Activated CD8-positive, alpha-beta T cell treated with anti-CD3 and anti-CD28 coated beads, Interleukin-2, amount 10 ng/mL, durations not matched to agents 7 days and 5 days (primary cell): ENCODE measurements at regions of chr3 and their contacts with region 1.

Region 1: DNA sequence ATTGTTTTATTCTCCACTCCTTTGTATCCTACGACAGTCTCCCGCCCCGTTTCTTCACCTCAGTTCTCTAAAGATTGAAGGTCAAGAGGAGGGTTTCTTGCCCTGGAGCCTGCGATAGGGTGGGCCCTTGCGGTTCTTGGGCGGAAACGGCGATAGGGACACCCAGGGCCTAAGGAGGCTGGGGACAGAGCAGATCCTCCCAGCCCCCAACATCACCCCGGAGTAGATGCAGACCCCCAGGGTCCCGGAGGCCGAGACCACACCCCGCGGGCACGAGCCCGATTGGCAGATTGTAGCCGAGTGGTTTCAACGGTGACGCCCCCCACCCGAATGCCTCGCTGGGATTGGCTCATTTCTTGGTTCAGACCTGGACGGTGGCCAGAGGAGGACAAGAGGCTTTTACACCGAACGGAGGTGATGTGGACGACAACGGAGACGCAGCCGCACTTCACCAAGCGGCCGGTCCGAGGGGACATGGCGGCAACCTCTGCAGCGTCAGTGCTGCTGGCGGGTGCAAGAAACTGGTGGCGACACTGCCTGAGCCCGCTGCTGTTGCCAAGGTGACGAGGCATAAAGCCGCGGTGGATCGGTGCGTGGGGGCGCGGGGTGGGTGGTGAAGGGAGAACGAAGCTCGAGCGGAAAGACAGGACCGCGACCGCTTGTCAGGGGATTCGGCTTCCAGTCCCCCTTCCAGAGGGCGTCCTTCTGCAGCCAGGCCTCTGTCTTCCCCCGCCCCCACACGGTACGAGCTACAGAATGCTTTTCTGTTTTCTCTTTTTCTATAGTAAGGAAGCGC is 19.0 kb upstream of the MCF2L2 start:
- DNase-seq: peak; percentile 85
- ATAC-seq: peak; percentile 90
- H3K4me3 Mint-ChIP-seq: peak overlapping the region; percentile 87
- H3K27ac Mint-ChIP-seq: peak overlapping the region; percentile 82
- H3K4me1 Mint-ChIP-seq: peaks cover 14% of the 10 kb centered on the region
- H3K27me3 Mint-ChIP-seq: peaks cover 10% of the 10 kb centered on the region

Region 2: GRCh38 chr3:183427876-183428446 is 19.4 kb before region 1 on chr3:
- CTCF ChIA-PET with region 1: interaction called, 4 read pairs
- POLR2A ChIA-PET with region 1: interaction called, 10 read pairs
- DNase-seq: peak; percentile 50
- ATAC-seq: peak; percentile 54
- H3K4me3 Mint-ChIP-seq: peak overlapping the region; percentile 84
- H3K27ac Mint-ChIP-seq: peak overlapping the region; percentile 70
- H3K4me1 Mint-ChIP-seq: peaks cover 37% of the 10 kb centered on the region
- H3K27me3 Mint-ChIP-seq: peaks cover 8% of the 10 kb centered on the region